HCT116 (cell line): ENCODE measurements at regions of chr18 and their contacts with region 1.

Region 1: DNA sequence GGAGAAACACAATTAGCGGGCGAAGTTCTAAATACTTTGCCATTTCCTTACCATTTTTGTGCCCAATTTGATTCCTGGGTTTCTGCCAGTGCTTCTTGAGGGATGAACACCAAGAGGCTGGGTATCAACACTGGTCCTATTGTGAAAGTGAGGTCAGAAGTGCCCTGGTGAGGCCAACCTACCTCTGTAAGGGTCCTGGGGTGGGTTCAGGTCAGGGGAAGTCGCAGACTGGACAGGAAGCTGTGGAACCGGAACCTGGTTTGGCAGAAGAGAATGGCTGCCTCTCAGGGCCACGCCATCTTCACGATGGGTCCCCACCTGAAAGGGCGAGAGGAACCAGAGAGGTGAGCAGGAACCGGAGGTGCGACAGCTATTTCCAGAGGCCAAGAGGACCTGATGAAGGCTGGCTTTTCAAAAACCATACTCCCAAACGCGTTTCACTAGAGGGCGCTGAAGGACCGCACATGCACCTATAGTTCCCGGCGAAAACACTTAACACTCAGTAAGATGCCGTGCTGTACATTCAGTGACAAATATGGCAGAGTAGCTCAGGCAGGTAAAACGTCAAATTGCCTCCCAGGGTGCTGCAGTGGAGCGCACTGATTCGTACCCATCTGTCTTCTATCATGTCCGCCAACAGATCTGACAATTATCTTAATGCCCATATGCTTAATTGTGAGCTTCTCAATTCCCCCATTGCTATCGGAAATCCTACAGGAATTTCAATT is 275.3 kb upstream of the CCDC68 start:
- DNase-seq: peak; percentile 48
- ATAC-seq: peak; percentile 98
- H3K4me3 ChIP-seq: no peak overlapping the region
- H3K27ac ChIP-seq: no peak overlapping the region
- H3K4me1 ChIP-seq: no peaks in the 10 kb centered on the region
- H3K27me3 ChIP-seq: 0 out of 2 replicates have a peak, but pooled peaks cover 5% of the 10 kb centered on the region
- CTCF ChIP-seq: peak; percentile 46 to 87 (median 78); a peak in 5 of 6 replicates
- POLR2A ChIP-seq: no peak
- RAD21 ChIP-seq: peak; percentile 79

Region 2: GRCh38 chr18:54871231-54871630 is 363.3 kb before region 1 on chr18:
- CTCF ChIA-PET with region 1: no interaction called
- POLR2A ChIA-PET with region 1: no interaction called
- RAD21 ChIA-PET with region 1: no interaction called
- intact Hi-C with region 1: no loop called
- DNase-seq: no peak
- ATAC-seq: no peak
- H3K4me3 ChIP-seq: no peak overlapping the region
- H3K27ac ChIP-seq: no peak overlapping the region
- H3K4me1 ChIP-seq: no peaks in the 10 kb centered on the region
- H3K27me3 ChIP-seq: no peaks in the 10 kb centered on the region
- CTCF ChIP-seq: no peak
- POLR2A ChIP-seq: no peak
- RAD21 ChIP-seq: no peak

Region 3: GRCh38 chr18:54888933-54889332 is 345.6 kb before region 1 on chr18:
- CTCF ChIA-PET with region 1: no interaction called
- POLR2A ChIA-PET with region 1: no interaction called
- RAD21 ChIA-PET with region 1: no interaction called
- intact Hi-C with region 1: no loop called
- DNase-seq: no peak
- ATAC-seq: no peak
- H3K4me3 ChIP-seq: no peak overlapping the region
- H3K27ac ChIP-seq: no peak overlapping the region
- H3K4me1 ChIP-seq: no peaks in the 10 kb centered on the region
- H3K27me3 ChIP-seq: no peaks in the 10 kb centered on the region
- CTCF ChIP-seq: no peak
- POLR2A ChIP-seq: no peak
- RAD21 ChIP-seq: no peak

Region 4: GRCh38 chr18:55206927-55207326 is 27.6 kb before region 1 on chr18:
- CTCF ChIA-PET with region 1: no interaction called
- POLR2A ChIA-PET with region 1: no interaction called
- RAD21 ChIA-PET with region 1: no interaction called
- intact Hi-C with region 1: no loop called
- DNase-seq: no peak
- ATAC-seq: no peak
- H3K4me3 ChIP-seq: no peak overlapping the region
- H3K27ac ChIP-seq: no peak overlapping the region
- H3K4me1 ChIP-seq: no peaks in the 10 kb centered on the region
- H3K27me3 ChIP-seq: no peaks in the 10 kb centered on the region
- CTCF ChIP-seq: no peak
- POLR2A ChIP-seq: no peak
- RAD21 ChIP-seq: no peak

Region 5: GRCh38 chr18:55251254-55251971 is 16.9 kb after region 1 on chr18:
- CTCF ChIA-PET with region 1: no interaction called
- POLR2A ChIA-PET with region 1: no interaction called
- RAD21 ChIA-PET with region 1: no interaction called
- intact Hi-C with region 1: no loop called
- DNase-seq: no peak
- ATAC-seq: no peak
- H3K4me3 ChIP-seq: no peak overlapping the region
- H3K27ac ChIP-seq: no peak overlapping the region
- H3K4me1 ChIP-seq: no peaks in the 10 kb centered on the region
- H3K27me3 ChIP-seq: peaks cover 10% of the 10 kb centered on the region
- CTCF ChIP-seq: no peak
- POLR2A ChIP-seq: no peak
- RAD21 ChIP-seq: no peak

Region 6: GRCh38 chr18:55275039-55275901 is 40.7 kb after region 1 on chr18:
- CTCF ChIA-PET with region 1: interaction called, 3 read pairs
- POLR2A ChIA-PET with region 1: no interaction called
- RAD21 ChIA-PET with region 1: no interaction called
- intact Hi-C with region 1: loop called (anchors 1 kb)
- DNase-seq: no peak
- ATAC-seq: no peak
- H3K4me3 ChIP-seq: no peak overlapping the region
- H3K27ac ChIP-seq: no peak overlapping the region
- H3K4me1 ChIP-seq: no peaks in the 10 kb centered on the region
- H3K27me3 ChIP-seq: no peaks in the 10 kb centered on the region
- CTCF ChIP-seq: peak in 2 of 3 experiments; percentile 10 to 46; a peak in 2 of 6 replicates
- POLR2A ChIP-seq: no peak
- RAD21 ChIP-seq: no peak

Region 7: GRCh38 chr18:55415258-55415871 is 180.8 kb after region 1 on chr18:
- CTCF ChIA-PET with region 1: no interaction called
- POLR2A ChIA-PET with region 1: no interaction called
- RAD21 ChIA-PET with region 1: no interaction called
- intact Hi-C with region 1: loop called (anchors 5 kb)
- DNase-seq: peak; percentile 37
- ATAC-seq: peak; percentile 84
- H3K4me3 ChIP-seq: no peak overlapping the region
- H3K27ac ChIP-seq: no peak overlapping the region
- H3K4me1 ChIP-seq: no peaks in the 10 kb centered on the region
- H3K27me3 ChIP-seq: no peaks in the 10 kb centered on the region
- CTCF ChIP-seq: peak; percentile 31 to 91 (median 72); a peak in 5 of 6 replicates
- POLR2A ChIP-seq: no peak
- RAD21 ChIP-seq: peak; percentile 60

Region 8: GRCh38 chr18:56575819-56576663 is 1341.5 kb after region 1 on chr18:
- CTCF ChIA-PET with region 1: interaction called, 8 read pairs
- POLR2A ChIA-PET with region 1: no interaction called
- RAD21 ChIA-PET with region 1: no interaction called
- intact Hi-C with region 1: loop called (anchors 1 kb)
- DNase-seq: peak; percentile 43
- ATAC-seq: peak; percentile 88
- H3K4me3 ChIP-seq: no peak overlapping the region
- H3K27ac ChIP-seq: no peak overlapping the region
- H3K4me1 ChIP-seq: no peaks in the 10 kb centered on the region
- H3K27me3 ChIP-seq: no peaks in the 10 kb centered on the region; the same call in 1 of the 2 replicates
- CTCF ChIP-seq: peak; percentile 44 to 73 (median 47); a peak in 5 of 6 replicates
- POLR2A ChIP-seq: no peak
- RAD21 ChIP-seq: peak; percentile 73